Activated CD8-positive, alpha-beta T cell treated with anti-CD3 and anti-CD28 coated beads, Interleukin-2, amount 10 ng/mL, durations not matched to agents 7 days and 5 days (primary cell): ENCODE measurements at regions of chr14 and their contacts with region 1.

Region 1: DNA sequence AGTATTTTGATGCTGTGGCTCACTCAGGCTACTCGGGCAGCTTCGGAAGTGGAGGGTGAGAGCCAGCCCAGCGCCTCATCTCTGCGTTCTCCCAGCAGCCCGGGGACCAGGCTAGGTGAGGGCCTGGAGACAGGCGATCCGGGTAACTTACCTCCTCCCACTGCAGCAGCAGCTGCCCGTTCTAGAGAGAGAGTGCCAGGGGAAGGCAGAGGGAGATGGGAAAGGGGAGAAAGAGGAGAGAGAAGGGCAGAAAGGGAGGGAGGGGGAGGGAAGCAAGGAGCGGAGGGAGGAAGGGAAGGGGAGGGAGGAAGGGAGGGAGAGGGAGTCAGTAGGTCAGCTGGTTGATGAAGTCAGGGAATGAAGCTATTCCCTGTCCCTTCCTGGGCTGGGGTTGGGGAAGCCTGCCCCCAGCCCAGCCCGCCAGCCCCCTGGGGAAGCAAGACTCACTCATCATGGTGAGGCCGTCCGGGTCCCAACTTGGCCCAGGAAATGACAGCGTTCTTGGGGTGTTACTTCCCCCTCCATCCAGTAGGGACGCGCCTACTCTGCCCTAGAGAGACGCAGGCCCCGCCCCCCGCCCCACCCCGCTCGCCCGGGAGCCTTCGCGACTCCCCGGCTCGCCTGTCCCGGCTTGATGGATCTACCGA is at the start of gene IFI27L2:
- DNase-seq: peak; percentile 84
- ATAC-seq: peak; percentile 98
- H3K4me3 Mint-ChIP-seq: peak within 1 kb of the TSS; percentile 78
- H3K27ac Mint-ChIP-seq: peak within 1 kb of the TSS; percentile 88
- H3K4me1 Mint-ChIP-seq: peaks cover 17% of the 10 kb centered on the region
- H3K27me3 Mint-ChIP-seq: peaks cover 11% of the 10 kb centered on the region
- total RNA-seq, gene IFI27L2: 65.2 to 74.6 TPM

Region 2: GRCh38 chr14:94009767-94010166 is 119.5 kb before region 1 on chr14:
- CTCF ChIA-PET with region 1: interaction called, 11 read pairs
- POLR2A ChIA-PET with region 1: no interaction called
- DNase-seq: no peak
- ATAC-seq: no peak
- H3K4me3 Mint-ChIP-seq: no peak overlapping the region
- H3K27ac Mint-ChIP-seq: no peak overlapping the region
- H3K4me1 Mint-ChIP-seq: peaks cover 62% of the 10 kb centered on the region
- H3K27me3 Mint-ChIP-seq: peaks cover 15% of the 10 kb centered on the region

Region 3: DNA sequence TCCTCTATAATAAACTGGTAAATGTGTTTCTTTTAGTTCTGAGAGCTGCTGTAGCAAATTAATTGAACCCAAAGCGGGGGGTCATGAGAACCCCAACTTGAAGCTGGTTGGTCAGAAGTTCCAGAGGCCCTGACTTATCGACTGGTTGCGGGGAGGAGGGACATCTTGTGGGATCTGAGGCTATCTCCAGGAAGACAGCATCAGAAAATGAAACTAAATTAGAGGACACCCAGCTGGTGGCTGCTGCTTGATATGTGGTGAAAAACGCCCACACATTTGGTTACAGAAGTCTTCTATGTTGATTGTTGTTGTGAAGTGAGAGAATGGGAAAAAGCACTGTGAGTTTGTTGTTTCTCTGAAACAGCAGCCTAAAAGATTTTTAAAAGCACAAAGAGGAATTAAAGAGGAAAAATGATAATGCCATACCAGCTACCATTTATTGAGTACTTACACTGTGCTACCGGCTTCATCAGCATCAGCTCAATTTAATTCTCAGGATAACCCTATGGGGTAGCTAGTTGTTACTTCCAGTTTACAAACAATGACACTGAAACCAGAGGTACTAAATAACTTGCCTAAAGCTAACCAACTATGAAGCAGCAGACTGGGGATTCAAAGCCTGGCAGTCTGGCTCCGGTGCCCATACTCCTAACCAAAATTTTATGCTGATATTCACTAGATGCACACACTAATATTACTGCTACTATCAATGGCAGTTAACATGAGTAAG is 72.5 kb before region 1 on chr14:
- CTCF ChIA-PET with region 1: interaction called, 28 read pairs
- POLR2A ChIA-PET with region 1: no interaction called
- DNase-seq: peak; percentile 59
- ATAC-seq: peak; percentile 66
- H3K4me3 Mint-ChIP-seq: peak overlapping the region; percentile 37
- H3K27ac Mint-ChIP-seq: peak overlapping the region; percentile 71
- H3K4me1 Mint-ChIP-seq: peaks cover 67% of the 10 kb centered on the region
- H3K27me3 Mint-ChIP-seq: no peaks in the 10 kb centered on the region

Region 4: DNA sequence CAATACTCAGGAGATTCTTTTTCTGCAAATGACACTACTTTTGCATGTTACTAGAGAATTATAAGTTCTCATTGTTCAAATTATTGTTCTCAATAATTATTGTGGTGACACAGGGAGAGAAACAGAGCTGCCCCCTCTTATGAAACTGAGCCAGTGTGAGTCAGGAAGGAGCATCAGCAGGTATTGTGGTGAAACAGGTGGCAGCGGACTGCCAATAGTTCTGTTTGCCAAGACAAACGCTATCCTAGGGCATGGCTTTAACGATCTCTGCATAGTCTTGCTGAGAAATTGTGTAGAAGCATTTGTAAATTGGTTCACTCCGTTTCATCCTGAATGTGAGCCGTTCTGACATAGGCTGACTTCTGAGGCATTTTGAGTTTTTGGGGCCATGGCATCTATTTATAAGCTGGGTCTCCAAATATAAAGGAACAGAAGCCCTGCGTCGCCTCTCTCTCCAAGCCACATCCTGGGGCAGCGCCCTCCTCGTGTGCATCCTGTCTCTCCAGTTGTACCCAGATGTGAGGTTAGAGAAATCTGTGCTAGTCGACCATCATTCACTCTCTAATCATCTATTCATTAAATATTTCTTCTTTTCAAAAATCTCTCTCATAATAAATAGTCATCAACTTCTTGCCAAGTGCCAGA is 29.1 kb after region 1 on chr14:
- CTCF ChIA-PET with region 1: interaction called, 11 read pairs
- POLR2A ChIA-PET with region 1: no interaction called
- DNase-seq: peak; percentile 65
- ATAC-seq: peak; percentile 83
- H3K4me3 Mint-ChIP-seq: peak overlapping the region; percentile 13
- H3K27ac Mint-ChIP-seq: peak overlapping the region; percentile 79
- H3K4me1 Mint-ChIP-seq: peaks cover 39% of the 10 kb centered on the region
- H3K27me3 Mint-ChIP-seq: peaks cover 17% of the 10 kb centered on the region

Region 5: DNA sequence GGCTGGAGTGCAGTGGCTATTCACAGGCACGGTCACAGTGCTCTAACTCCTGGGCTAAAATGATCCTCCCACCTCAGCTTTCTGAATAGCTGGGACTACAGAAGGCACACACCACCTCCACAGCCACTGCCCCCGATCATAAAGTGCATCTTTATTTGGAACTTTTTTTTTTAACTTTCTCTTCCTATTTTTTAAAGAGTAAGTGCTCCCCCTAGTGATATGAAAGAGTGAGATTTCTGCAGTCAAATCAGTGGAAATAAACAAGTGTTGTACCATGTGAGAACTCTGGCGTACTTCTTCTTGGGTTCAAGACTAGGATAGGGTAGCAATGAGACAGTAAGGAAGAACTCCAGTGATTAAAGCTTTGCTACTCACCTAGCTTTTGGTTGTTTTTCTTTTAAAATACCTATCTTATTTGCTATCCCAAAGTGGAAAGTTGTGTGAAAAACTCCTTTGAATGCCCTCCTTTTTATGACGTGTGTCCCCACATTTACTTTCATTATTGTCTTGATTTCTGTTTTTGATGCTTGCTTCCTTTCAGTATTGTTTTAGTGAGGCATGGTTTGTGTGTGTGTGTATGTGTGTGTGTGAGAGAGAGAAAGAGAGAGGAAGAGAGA is 51.5 kb after region 1 on chr14:
- CTCF ChIA-PET with region 1: interaction called, 79 read pairs
- POLR2A ChIA-PET with region 1: no interaction called
- DNase-seq: peak; percentile 27
- ATAC-seq: peak; percentile 87
- H3K4me3 Mint-ChIP-seq: peak overlapping the region; percentile 36
- H3K27ac Mint-ChIP-seq: peak overlapping the region; percentile 0
- H3K4me1 Mint-ChIP-seq: peaks cover 9% of the 10 kb centered on the region
- H3K27me3 Mint-ChIP-seq: peaks cover 50% of the 10 kb centered on the region